ENCODE measurements at regions of chr17 and their contacts with region 1.

Region 1: DNA sequence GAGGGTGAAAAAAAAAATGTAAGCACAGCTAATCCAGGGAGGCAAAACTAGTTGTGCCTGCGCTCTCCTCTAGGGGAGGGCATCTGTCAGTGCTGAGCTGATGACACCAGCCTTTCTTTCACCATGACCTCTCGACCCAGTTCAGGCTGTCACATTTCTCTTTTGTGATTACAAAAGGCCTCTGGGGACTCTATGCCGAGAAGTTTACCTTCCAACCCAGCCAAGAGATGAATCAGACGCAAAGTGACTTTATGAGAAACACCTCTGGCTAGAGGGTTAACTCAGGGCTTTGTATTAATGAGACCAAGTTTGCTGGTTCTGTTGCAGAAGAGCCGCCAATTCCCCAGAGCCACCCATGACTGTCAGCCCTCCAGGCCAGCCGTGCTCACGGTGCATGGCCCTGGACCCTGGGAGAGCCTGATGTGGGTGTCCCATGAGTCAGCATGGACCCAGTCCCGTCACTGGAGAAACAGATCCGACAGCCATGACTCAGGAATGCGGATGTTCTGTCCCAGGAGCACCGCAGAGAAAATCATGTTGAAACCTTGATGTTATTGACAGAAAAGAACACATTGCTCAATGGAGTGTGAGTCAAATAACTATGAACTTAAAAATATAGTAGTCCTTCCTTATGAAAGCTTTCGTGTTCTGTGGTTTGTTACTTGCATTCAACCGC is 437.2 kb downstream of the HS3ST3B1 start:
- H3K4me3 Mint-ChIP-seq: no peak overlapping the region
- H3K27ac Mint-ChIP-seq: peak overlapping the region; percentile 48
- H3K4me1 Mint-ChIP-seq: peaks cover 63% of the 10 kb centered on the region
- H3K27me3 Mint-ChIP-seq: no peaks in the 10 kb centered on the region

Region 2: DNA sequence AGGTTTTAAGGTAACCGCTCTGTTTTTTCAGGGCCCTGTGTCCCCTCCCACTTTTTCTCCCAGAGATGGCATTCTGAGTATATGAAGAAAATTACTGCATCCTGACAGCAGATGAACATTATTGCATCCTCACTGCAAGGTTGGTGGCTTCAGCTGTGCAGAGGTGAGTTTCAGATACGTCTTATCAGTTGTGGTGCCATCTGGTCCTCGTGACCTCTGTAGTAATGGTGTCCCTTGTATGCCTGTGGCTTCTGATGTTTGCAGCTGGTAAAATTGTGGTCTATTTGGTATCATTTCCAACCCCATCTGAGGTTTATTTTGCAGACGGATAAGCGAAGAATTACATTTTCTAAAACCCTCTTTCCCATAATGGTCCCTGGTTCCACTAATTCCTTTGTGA is 20.3 kb before region 1 on chr17:
- intact Hi-C with region 1: loop called (anchors 1 kb)
- H3K4me3 Mint-ChIP-seq: no peak overlapping the region
- H3K27ac Mint-ChIP-seq: no peak overlapping the region
- H3K4me1 Mint-ChIP-seq: peaks cover 6% of the 10 kb centered on the region
- H3K27me3 Mint-ChIP-seq: no peaks in the 10 kb centered on the region

Region 3: DNA sequence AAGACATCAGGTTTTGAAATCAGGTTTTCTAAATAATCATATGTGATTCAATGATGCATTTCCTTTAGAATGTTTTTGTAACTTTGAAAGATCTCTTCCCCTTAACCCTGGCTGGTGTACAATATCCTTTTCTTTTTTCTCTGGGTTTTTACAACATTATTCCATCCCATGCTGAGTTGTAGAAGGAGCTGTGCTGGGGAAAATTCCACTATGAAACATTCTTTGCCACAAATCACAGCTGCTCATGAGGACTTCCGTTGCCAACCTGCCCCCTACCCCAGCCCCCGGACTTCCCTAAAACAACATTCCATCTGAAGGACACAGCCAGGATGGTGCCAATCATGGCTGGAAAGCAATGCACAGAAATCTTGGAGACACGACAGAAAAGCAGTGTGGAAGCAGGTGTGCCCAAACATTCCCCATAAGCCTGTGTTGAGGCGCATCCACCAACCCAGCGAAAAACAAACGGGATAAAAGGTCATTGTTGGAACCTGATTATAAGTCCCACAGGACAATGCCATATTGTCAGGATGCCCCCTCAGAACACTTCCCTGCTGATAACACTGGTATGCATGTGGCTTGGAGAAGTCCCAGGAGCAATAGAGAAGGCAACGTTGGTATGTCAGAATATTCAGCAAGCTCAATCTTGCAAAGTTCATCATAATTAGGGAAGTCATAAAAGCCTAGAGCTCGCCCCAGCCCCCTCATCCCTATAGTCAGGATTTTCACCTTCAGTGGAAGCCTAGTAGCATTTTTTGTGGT is 37.8 kb after region 1 on chr17:
- intact Hi-C with region 1: loop called (anchors 5 kb)
- H3K4me3 Mint-ChIP-seq: no peak overlapping the region
- H3K27ac Mint-ChIP-seq: no peak overlapping the region
- H3K4me1 Mint-ChIP-seq: peaks cover 41% of the 10 kb centered on the region
- H3K27me3 Mint-ChIP-seq: no peaks in the 10 kb centered on the region